ENCODE measurements at regions of chr3 and their contacts with region 1.

Region 1: DNA sequence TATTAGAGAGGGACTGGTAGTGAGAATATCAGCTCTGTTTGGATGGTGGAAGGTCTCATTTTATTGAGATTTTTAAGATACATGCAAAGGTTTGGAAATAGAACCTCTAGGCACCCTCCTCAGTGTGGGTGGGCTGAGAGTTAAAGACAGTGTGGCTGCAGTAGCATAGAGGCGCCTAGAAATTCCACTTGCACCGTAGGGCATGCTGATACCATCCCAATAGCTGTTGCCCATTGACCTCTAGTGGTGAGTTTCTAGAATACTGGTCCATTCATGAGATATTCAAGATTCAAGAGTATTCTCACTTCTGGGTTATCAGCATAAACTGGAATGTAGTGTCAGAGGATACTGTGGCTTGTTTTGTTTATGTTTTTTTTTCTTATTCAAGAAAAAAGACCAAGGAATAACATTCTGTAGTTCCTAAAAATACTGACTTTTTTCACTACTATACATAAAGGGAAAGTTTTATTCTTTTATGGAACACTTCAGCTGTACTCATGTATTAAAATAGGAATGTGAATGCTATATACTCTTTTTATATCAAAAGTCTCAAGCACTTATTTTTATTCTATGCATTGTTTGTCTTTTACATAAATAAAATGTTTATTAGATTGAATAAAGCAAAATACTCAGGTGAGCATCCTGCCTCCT is 87.2 kb downstream of the TGFBR2 start:
- DNase-seq: peak in 4 of 5 donors; percentile 5 to 68 (median 60)
- H3K4me3 ChIP-seq: no peak overlapping the region
- H3K4me3 Mint-ChIP-seq: no peak overlapping the region
- H3K27ac ChIP-seq: no peak overlapping the region
- H3K27ac Mint-ChIP-seq: peak overlapping the region in 7 of 8 donors; percentile 36 to 76 (median 50)
- H3K4me1 ChIP-seq: peaks cover 38% of the 10 kb centered on the region
- H3K4me1 Mint-ChIP-seq: peaks cover 42 to 82% (median 71%) of the 10 kb centered on the region in 3 donors
- H3K27me3 ChIP-seq: no peaks in the 10 kb centered on the region
- H3K27me3 Mint-ChIP-seq: no peaks in the 10 kb centered on the region

Region 2: GRCh38 chr3:30042274-30042859 is 651.2 kb before region 1 on chr3:
- CTCF ChIA-PET with region 1: interaction called, 12 read pairs
- POLR2A ChIA-PET with region 1: no interaction called
- DNase-seq: peak; percentile 7 to 53 (median 26)
- H3K4me3 ChIP-seq: no peak overlapping the region
- H3K4me3 Mint-ChIP-seq: no peak overlapping the region
- H3K27ac ChIP-seq: no peak overlapping the region
- H3K27ac Mint-ChIP-seq: no peak overlapping the region
- H3K4me1 ChIP-seq: no peaks in the 10 kb centered on the region
- H3K4me1 Mint-ChIP-seq: no peaks in the 10 kb centered on the region
- H3K27me3 ChIP-seq: no peaks in the 10 kb centered on the region
- H3K27me3 Mint-ChIP-seq: peaks cover 13 to 38% of the 10 kb centered on the region in 2 donors

Region 3: GRCh38 chr3:30199096-30199759 is 494.4 kb before region 1 on chr3:
- CTCF ChIA-PET with region 1: interaction called, 11 read pairs
- POLR2A ChIA-PET with region 1: no interaction called
- DNase-seq: peak; percentile 18 to 63 (median 45)
- H3K4me3 ChIP-seq: no peak overlapping the region
- H3K4me3 Mint-ChIP-seq: no peak overlapping the region
- H3K27ac ChIP-seq: no peak overlapping the region
- H3K27ac Mint-ChIP-seq: no peak overlapping the region
- H3K4me1 ChIP-seq: no peaks in the 10 kb centered on the region
- H3K4me1 Mint-ChIP-seq: no peaks in the 10 kb centered on the region
- H3K27me3 ChIP-seq: no peaks in the 10 kb centered on the region
- H3K27me3 Mint-ChIP-seq: peaks cover 0 to 3% of the 10 kb centered on the region in 2 donors

Region 4: DNA sequence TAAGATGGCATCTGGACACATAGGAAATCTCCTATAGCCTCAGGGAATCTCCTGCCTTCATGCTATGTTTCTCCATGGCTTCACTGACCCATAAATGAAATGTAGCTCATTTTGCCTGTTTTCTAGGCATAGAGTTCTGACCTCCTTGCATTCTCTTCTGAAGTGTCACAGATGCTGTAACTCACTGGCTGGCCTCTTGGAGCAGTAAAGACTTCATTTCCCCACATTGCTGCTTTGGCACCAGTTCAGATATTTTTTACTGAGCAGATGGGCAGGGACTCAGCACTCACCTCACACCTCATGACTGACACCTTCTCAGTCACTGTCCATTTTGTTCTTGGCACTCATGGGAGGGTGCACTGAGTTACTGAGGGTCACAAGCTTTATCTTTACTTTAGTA is 373.9 kb before region 1 on chr3:
- CTCF ChIA-PET with region 1: interaction called, 16 read pairs
- POLR2A ChIA-PET with region 1: interaction called, 3 read pairs
- DNase-seq: peak; percentile 1 to 54 (median 43)
- H3K4me3 ChIP-seq: no peak overlapping the region
- H3K4me3 Mint-ChIP-seq: no peak overlapping the region
- H3K27ac ChIP-seq: no peak overlapping the region
- H3K27ac Mint-ChIP-seq: no peak overlapping the region
- H3K4me1 ChIP-seq: peaks cover 8% of the 10 kb centered on the region
- H3K4me1 Mint-ChIP-seq: peaks cover 4 to 13% (median 5%) of the 10 kb centered on the region in 3 donors
- H3K27me3 ChIP-seq: no peaks in the 10 kb centered on the region
- H3K27me3 Mint-ChIP-seq: no peaks in the 10 kb centered on the region

Region 5: DNA sequence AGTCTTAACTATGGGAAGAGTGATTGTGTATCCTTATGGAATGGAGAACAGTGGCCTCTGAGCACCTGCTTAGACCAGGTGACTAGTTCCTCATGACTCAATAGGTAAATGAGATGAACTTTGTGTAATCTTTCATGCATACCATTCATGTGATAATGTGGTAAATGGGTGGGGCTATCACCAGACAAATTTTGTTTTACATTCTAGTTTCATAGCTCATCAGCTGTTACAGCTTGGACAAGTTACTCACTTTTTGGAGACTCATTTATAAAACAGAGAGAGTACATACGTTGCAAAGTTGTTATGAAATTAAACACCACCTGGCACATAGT is 190.9 kb before region 1 on chr3:
- CTCF ChIA-PET with region 1: no interaction called
- POLR2A ChIA-PET with region 1: no interaction called
- DNase-seq: no peak
- H3K4me3 ChIP-seq: no peak overlapping the region
- H3K4me3 Mint-ChIP-seq: no peak overlapping the region
- H3K27ac ChIP-seq: no peak overlapping the region
- H3K27ac Mint-ChIP-seq: peak overlapping the region in 1 of 8 donors; percentile 37
- H3K4me1 ChIP-seq: no peaks in the 10 kb centered on the region
- H3K4me1 Mint-ChIP-seq: peaks cover 6 to 25% (median 18%) of the 10 kb centered on the region in 3 donors
- H3K27me3 ChIP-seq: no peaks in the 10 kb centered on the region
- H3K27me3 Mint-ChIP-seq: peaks cover 6 to 11% of the 10 kb centered on the region in 2 donors

Region 6: DNA sequence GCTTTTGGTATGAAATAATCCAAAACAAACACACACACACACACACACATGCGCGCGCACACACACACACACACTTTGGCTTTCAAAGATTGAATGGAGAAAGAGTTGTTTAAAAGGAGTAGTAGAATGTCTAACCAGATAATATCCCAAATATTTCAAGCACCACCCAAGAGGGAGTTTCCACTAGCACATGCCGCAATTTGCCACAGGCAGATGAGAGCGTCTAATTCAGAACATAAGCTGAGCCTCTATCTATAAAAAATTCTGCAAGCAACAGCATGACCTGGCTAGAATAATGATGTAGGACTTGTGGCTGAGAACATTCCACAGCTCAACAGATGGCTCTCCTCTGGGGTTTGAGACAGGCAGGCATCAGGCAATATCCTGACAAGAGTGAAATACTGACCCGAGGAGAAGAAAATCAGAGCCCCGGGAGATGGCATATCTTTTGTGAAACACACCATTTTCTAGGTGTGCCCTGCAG is 503.3 kb after region 1 on chr3:
- CTCF ChIA-PET with region 1: no interaction called
- POLR2A ChIA-PET with region 1: no interaction called
- DNase-seq: no peak
- H3K4me3 ChIP-seq: no peak overlapping the region
- H3K4me3 Mint-ChIP-seq: no peak overlapping the region
- H3K27ac ChIP-seq: no peak overlapping the region
- H3K27ac Mint-ChIP-seq: no peak overlapping the region
- H3K4me1 ChIP-seq: no peaks in the 10 kb centered on the region
- H3K4me1 Mint-ChIP-seq: peaks cover 0 to 5% (median 0%) of the 10 kb centered on the region in 3 donors
- H3K27me3 ChIP-seq: no peaks in the 10 kb centered on the region
- H3K27me3 Mint-ChIP-seq: no peaks in the 10 kb centered on the region

Region 7: DNA sequence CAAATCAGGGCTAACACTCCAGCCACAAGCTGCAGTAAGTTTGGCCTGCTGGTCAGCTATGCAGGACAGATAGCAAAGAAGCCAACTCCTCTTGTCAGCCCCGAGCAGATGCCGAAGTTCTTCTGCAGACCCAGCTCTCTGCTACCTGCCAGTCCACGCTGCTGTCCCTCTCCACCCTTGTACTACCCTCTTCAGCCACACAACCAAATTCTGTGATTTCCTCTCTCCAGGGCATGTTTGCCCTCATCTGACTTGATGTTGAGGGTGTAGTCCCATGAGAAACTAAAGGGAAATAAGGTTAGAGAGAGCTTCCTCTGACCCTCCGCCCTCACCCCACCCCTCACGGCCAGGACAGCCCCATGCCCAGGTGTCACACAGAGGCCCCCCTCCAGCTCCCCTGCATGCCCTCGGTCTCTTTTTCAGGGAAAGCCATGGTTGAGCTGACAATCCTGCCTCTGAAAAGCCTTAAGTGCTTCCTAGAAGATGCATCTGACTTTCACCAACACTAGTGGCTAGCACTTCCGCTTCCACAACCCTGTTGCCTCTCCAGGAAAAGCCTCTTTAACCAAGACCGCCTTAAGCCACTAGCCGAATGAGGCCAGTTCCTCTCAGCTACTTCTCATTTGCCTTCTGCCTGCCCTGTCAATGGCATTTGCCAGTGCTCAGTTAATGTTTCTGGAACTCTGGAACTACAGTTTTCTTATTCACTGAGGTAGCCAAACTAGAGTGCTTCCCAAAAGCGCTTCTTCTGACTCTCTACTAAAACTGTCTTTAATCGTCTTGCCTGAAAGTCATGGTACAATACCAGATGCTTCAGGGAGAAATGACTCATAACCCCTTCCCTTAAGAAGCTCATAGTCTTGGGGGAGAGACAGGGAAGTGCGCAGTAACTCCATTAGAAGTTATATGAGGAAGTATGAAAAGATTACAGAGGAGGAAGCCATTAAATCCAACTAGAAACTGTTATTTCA is 538.7 kb after region 1 on chr3:
- CTCF ChIA-PET with region 1: no interaction called
- POLR2A ChIA-PET with region 1: no interaction called
- DNase-seq: no peak
- H3K4me3 ChIP-seq: no peak overlapping the region
- H3K4me3 Mint-ChIP-seq: peak overlapping the region in 2 of 7 donors; percentile 46 to 47
- H3K27ac ChIP-seq: no peak overlapping the region
- H3K27ac Mint-ChIP-seq: peak overlapping the region in 7 of 8 donors; percentile 23 to 83 (median 45)
- H3K4me1 ChIP-seq: peaks cover 60% of the 10 kb centered on the region
- H3K4me1 Mint-ChIP-seq: peaks cover 58 to 78% (median 72%) of the 10 kb centered on the region in 3 donors
- H3K27me3 ChIP-seq: no peaks in the 10 kb centered on the region
- H3K27me3 Mint-ChIP-seq: peaks cover 0 to 3% of the 10 kb centered on the region in 2 donors

Region 8: GRCh38 chr3:31456373-31456772 is 762.8 kb after region 1 on chr3:
- CTCF ChIA-PET with region 1: no interaction called
- POLR2A ChIA-PET with region 1: no interaction called
- DNase-seq: no peak
- H3K4me3 ChIP-seq: no peak overlapping the region
- H3K4me3 Mint-ChIP-seq: no peak overlapping the region
- H3K27ac ChIP-seq: no peak overlapping the region
- H3K27ac Mint-ChIP-seq: no peak overlapping the region
- H3K4me1 ChIP-seq: peaks cover 7% of the 10 kb centered on the region
- H3K4me1 Mint-ChIP-seq: peaks cover 15 to 19% (median 15%) of the 10 kb centered on the region in 3 donors
- H3K27me3 ChIP-seq: no peaks in the 10 kb centered on the region
- H3K27me3 Mint-ChIP-seq: no peaks in the 10 kb centered on the region

Measured in CD8-positive, alpha-beta memory T cell (primary cell).